OCI-LY7 (cell line): ENCODE measurements at regions of chr12 and their contacts with region 1.

Region 1: DNA sequence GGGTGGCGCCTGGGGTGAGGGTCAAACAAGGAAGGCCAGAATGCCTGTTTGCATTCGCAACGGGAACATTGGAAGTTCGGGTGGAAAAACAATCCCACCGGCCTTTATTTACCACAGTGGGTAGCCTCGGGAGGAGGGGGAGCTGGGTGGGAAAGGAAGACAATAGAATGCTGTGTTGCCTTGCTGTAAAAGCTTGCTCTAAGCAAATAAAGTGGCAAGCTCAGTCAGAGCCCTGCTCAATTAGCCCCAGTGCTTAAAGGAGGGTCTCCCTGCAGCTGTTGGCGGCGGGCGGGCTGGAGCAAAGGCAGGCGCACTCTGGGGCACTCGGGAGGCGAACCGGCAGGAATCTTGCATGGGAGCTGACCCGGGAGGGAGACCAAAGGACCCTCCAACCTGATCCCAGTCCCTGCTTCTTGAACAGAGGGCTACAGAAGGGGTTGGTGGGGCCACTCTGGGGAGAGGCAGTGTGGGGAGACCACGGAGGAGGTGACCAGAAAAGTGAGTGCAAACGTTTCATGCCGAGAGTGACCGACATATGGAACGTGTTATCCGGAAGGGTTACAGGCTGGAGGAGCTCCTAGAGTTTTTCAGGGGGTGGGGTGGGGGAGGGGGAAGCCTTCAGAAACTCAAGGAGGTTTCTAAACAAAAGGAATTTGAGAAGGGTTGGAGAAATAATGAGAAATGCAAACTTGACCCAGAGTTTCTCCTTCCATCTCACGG is 48.5 kb downstream of the NTF3 start:
- DNase-seq: no peak
- H3K4me3 ChIP-seq: no peak overlapping the region
- H3K27ac ChIP-seq: peak overlapping the region; percentile 98
- H3K4me1 ChIP-seq: peaks cover 61% of the 10 kb centered on the region
- CTCF ChIP-seq: no peak

Region 2: DNA sequence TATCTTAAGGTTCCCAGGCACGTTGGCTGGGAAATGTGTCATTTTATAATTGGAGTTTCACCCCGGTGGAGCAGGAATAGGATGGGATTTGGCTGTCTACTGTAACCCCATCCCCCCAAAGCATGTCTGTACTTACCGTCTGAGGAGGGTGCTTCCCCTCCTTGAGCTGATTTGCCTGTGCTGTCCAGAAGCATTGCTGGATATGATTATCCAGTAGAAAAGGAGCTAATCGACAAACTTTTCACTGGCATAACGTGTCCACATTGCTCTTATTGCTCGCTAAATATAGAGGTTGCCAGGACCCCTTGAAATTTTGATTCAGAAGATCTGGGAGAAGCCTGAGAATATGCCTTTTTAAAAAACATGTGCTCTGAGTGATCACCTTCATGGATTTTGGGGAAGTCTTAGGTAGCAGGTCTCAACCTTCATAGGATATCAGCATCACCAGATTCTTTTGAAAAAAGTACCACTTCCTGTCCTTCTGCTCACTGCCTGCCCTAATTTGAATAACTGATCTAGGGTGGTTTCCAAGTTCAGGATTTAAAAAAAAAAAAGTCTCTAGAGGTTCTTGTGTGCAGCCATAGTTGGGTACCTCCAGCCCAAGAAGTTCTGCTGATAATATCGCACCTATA is 651.1 kb before region 1 on chr12:
- CTCF ChIA-PET with region 1: no interaction called
- POLR2A ChIA-PET with region 1: no interaction called
- intact Hi-C with region 1: loop called (anchors 5 kb)
- DNase-seq: peak; percentile 90
- H3K4me3 ChIP-seq: peak overlapping the region; percentile 82
- H3K27ac ChIP-seq: peak overlapping the region; percentile 98
- H3K4me1 ChIP-seq: peaks cover 54% of the 10 kb centered on the region
- CTCF ChIP-seq: no peak

Region 3: GRCh38 chr12:5442251-5443006 is 37.9 kb before region 1 on chr12:
- CTCF ChIA-PET with region 1: no interaction called
- POLR2A ChIA-PET with region 1: interaction called, 10 read pairs
- intact Hi-C with region 1: no loop called
- DNase-seq: peak; percentile 42
- H3K4me3 ChIP-seq: no peak overlapping the region
- H3K27ac ChIP-seq: no peak overlapping the region
- H3K4me1 ChIP-seq: peaks cover 80% of the 10 kb centered on the region
- CTCF ChIP-seq: peak; percentile 73

Region 4: DNA sequence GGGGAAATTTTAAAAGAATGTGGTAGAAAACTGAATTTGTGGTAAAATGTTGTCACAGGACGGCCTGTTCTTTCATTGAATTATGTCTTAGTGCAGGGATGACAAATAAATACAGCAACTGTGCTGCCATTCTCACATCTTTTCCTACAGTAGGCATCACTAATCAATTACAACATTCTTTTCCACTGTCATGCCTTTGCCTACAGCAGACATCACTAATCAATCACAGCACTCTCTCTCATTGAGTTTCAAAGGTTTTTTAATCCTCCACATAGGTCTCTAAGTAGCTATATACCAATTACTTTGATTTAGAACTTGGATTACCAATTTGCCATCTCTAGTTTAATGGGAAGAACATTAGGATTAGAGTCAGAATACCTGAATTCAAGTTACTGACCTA is 18.4 kb before region 1 on chr12:
- CTCF ChIA-PET with region 1: interaction called, 5 read pairs
- POLR2A ChIA-PET with region 1: interaction called, 29 read pairs
- intact Hi-C with region 1: loop called (anchors 1 kb)
- DNase-seq: no peak
- H3K4me3 ChIP-seq: no peak overlapping the region
- H3K27ac ChIP-seq: no peak overlapping the region
- H3K4me1 ChIP-seq: peaks cover 40% of the 10 kb centered on the region
- CTCF ChIP-seq: no peak

Region 5: DNA sequence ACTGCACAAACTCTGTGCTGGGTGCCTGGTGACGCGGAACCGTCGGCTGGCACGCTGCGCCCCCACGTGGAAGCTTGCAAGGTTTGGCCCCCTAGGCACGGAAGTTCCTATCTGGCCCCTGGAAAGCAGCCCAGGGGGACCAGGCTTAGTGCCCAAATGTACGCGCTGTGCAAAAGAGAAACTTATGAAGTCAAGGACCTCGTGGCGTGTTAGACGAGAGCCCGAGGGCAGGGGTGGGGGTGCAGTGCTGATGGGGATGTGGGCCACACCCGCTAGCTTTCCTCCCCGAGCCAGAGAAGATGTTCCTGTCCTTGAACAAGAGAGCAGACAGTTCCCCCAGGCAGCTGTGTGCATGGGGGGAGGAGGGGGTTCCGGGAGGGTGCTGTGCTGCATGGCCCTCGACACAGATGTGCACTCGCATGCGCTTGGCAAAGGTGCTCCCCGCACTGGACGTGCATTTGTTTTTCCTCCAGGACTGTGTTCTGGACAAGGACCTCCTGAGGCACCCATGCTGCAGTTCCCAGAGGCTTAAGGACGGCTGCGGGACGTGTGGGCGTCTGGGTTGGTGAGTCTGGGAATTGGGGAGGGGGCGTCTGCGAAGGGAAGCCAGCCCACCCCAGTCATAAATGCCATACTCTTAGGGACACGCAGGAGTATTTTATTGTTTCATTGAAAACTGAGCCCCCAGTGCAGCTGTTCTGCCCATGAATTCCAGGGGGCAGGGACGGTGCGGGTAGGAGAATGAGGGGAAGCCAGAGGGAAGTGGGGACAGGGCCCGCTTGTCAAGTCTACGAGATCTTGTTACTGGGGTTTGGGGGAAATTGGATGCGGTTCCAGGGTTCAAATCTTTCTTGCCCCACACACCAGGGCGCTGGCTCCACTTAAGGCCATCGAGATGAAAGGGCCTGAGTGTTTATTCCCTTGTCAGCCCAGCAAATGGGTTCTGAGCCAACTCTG is 31.5 kb after region 1 on chr12:
- CTCF ChIA-PET with region 1: no interaction called
- POLR2A ChIA-PET with region 1: interaction called, 3 read pairs
- intact Hi-C with region 1: loop called (anchors 1 kb)
- DNase-seq: peak; percentile 81
- H3K4me3 ChIP-seq: peak overlapping the region; percentile 24
- H3K27ac ChIP-seq: no peak overlapping the region
- H3K4me1 ChIP-seq: peaks cover 13% of the 10 kb centered on the region
- CTCF ChIP-seq: peak; percentile 95